ENCODE measurements at regions of chr11 and their contacts with region 1.

Region 1: DNA sequence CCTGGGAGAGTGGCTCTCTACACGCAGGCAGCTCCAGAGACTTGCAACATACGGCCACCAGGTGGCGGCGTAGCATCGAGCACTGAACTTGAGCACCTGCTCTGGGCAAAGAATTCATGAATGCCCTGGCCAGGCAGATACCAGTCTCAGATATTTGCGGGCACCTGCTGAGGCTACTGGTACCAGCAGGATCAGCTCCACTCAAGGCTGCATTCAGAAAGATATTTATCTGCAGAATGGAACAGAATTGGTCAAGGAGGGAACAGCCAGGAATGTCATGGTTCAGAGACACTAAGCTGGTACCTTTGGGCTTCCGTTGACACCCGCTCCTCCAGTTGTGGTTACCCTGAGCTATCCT is 10.8 kb upstream of the CCDC86 start:
- DNase-seq: peak; percentile 83 to 94 (median 90)
- ATAC-seq: peak; percentile 93
- H3K4me3 ChIP-seq: no peak overlapping the region
- H3K4me1 ChIP-seq: no peaks in the 10 kb centered on the region
- CTCF ChIP-seq: peak; percentile 85

Region 2: DNA sequence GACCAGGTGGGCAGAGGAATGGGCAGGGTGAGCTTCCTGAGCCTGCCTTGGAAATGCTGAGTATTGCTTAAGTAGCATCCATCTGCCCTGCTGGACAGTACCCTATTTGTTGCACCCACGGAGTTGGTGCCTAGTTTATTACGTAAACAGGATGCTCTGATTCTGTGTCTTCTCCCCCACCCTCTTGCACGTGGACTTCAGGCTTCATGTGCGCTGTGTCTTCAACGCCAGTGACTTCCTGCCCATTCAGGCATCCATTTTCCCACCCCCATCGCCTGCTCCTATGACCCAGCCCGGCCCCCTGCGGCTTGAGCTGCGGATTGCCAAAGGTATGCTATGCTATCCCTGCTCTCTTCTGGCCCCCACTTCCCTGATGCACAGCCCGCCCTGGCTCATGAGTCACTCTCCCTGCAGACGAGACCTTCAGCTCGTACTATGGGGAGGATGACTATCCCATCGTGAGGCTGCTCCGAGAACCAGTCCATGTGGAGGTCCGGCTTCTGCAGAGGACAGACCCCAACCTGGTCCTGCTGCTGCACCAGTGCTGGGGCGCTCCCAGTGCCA is 41.9 kb after region 1 on chr11:
- intact Hi-C with region 1: no loop called
- DNase-seq: peak in 1 of 3 donors; percentile 49
- ATAC-seq: peak; percentile 23
- H3K4me3 ChIP-seq: no peak overlapping the region
- H3K4me1 ChIP-seq: no peaks in the 10 kb centered on the region
- CTCF ChIP-seq: no peak

Region 3: DNA sequence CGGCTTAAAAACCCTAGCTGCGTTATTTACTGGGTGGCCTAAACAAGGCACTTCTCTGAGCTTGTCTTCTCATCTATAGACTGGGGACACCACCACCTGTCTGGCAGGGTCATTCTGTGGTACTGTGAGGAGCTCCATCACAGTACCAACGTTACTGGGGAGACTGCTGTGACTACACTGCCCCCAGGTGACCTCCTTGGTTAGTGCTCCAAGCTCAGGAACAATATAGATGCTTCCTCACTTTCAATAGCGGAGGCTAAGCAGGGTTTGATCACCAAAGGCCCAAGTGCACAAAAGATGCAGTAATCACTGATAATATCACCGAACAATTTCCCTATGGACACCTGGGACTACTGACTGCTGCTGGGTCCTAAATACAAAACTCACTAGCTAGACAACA is 56.4 kb after region 1 on chr11:
- intact Hi-C with region 1: loop called in 1 of 2 experiments (anchors 5 kb)
- DNase-seq: peak in 2 of 3 donors; percentile 67 to 81
- ATAC-seq: peak; percentile 91
- H3K4me3 ChIP-seq: no peak overlapping the region
- H3K4me1 ChIP-seq: no peaks in the 10 kb centered on the region
- CTCF ChIP-seq: peak; percentile 19

Region 4: GRCh38 chr11:61187505-61188130 is 356.5 kb after region 1 on chr11:
- intact Hi-C with region 1: loop called in 1 of 2 experiments (anchors 10 kb)
- DNase-seq: peak in 2 of 3 donors; percentile 65 to 92
- ATAC-seq: peak; percentile 82
- H3K4me3 ChIP-seq: no peak overlapping the region
- H3K4me1 ChIP-seq: no peaks in the 10 kb centered on the region
- CTCF ChIP-seq: peak; percentile 88

Measured in mucosa of descending colon (tissue), 3 donors.